GM18951 (cell line): ENCODE measurements at regions of chr19 and their contacts with region 1.

Region 1: DNA sequence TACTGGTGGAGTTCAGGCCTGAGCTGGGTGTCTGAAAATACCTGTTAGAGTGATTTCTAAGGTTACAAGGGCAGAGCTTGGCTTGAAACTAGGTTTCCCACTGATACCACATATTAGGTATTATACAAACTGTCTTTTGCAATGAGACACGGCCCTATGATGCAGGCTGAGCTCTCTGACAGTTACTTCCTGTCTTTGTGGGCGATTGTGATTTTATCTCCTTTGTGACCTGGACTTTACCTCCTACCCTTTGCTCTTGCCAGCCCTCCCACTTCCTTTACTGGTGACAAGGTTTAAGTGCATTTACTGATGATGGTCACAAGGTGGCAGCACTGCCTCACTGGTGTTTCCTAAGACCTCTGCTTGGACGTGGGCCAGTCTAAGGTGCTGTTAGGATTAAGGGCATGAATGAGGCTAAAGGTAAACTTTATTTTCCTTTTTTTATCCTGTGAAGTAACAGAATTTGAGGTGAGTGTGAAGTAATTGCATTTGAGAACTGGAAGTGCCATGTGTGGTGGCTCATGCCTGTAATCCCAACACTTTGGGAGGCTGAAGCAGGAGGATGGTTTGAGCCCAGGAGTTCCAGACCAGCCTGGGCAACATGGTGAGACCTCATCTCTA is 7.7 kb upstream of the CXCL17 start:
- POLR2A ChIP-seq: no peak

Region 2: GRCh38 chr19:42176990-42177685 is 273.3 kb before region 1 on chr19:
- in situ Hi-C with region 1: no loop called
- POLR2A ChIP-seq: no peak

Region 3: GRCh38 chr19:42531313-42531712 is 80.9 kb after region 1 on chr19:
- in situ Hi-C with region 1: loop called (anchors 5 kb)
- POLR2A ChIP-seq: no peak